AG04450 (cell line): ENCODE measurements at regions of chr7 and their contacts with region 1.

Region 1: GRCh38 chr7:131688738-131689661 is 132.6 kb upstream of the PODXL start:
- DNase-seq: peak; percentile 6
- H3K4me3 ChIP-seq: no peak overlapping the region
- H3K27ac ChIP-seq: no peak overlapping the region
- H3K27me3 ChIP-seq: peaks cover 31% of the 10 kb centered on the region
- CTCF ChIP-seq: peak; percentile 95

Region 2: DNA sequence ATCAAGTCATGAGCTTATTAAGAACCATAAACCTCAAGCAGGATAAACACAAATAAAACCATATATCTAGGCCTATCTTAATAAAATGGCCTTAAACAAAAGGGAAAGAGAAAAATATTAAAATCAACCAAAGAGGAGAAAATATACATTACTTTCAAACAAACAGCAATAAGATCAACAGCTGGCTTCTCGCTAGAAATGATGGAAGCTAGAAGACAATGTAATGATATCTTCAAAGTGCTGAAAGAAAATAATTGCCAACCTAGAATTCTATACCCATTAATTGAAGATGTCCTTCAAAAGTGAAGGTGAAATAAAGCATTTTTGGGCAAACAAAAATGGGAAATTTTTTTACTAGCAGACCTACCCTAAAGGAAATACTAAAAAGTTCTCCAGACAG is 10.3 kb after region 1 on chr7:
- CTCF ChIA-PET with region 1: interaction called, 55 read pairs
- POLR2A ChIA-PET with region 1: no interaction called
- DNase-seq: no peak
- H3K4me3 ChIP-seq: no peak overlapping the region
- H3K27ac ChIP-seq: no peak overlapping the region
- H3K27me3 ChIP-seq: peaks cover 2% of the 10 kb centered on the region
- CTCF ChIP-seq: no peak